RWPE1 (cell line): ENCODE measurements at regions of chr12 and their contacts with region 1.

Region 1: GRCh38 chr12:49064767-49065152 is 4.2 kb upstream of the KMT2D start:
- DNase-seq: no peak
- H3K27ac ChIP-seq: no peak overlapping the region
- CTCF ChIP-seq: no peak

Region 2: GRCh38 chr12:49098035-49098451 is 33.3 kb after region 1 on chr12:
- CTCF ChIA-PET with region 1: interaction called, 12 read pairs
- POLR2A ChIA-PET with region 1: no interaction called
- DNase-seq: no peak
- H3K27ac ChIP-seq: no peak overlapping the region
- CTCF ChIP-seq: peak; percentile 49

Region 3: DNA sequence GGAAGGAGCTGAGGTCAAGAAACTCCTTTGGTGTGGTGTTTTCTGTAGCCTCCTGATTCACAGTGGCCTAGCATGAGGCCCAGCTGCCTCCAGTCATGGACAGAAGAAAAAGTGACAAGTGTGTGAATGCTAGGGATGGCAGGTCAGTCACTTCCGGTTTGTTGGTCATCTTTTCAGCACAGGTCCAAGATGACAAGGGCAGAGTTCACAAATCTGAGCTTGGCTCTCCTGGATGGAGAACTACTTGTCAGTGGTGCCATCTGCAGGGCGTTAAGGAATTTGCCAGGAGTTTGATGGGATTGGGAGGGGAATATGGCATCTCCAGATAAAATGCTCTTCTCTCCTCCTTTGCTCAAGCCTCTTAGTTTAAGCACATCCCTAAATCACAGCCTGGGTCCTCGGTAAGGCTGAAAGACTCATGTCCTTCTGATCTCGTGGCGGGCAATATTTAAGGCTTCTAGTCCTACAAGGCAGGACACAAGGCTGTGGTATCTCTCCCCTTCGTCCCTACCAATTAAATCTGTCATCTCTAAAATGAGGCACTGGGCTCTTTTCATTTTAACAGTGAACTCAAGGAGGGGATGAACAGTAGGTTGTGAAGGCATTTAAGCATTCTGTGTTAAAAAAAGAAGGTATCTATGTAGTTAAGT is 56.4 kb after region 1 on chr12:
- CTCF ChIA-PET with region 1: interaction called, 19 read pairs
- POLR2A ChIA-PET with region 1: no interaction called
- DNase-seq: peak; percentile 62
- H3K27ac ChIP-seq: no peak overlapping the region
- CTCF ChIP-seq: peak; percentile 66

Region 4: GRCh38 chr12:49130151-49131050 is 65.6 kb after region 1 on chr12:
- CTCF ChIA-PET with region 1: interaction called, 21 read pairs
- POLR2A ChIA-PET with region 1: interaction called, 5 read pairs
- DNase-seq: peak; percentile 90
- H3K27ac ChIP-seq: peak overlapping the region; percentile 99
- CTCF ChIP-seq: peak; percentile 94